Tibial artery (tissue), 4 donors: ENCODE measurements at regions of chr2 and their contacts with region 1.

Region 1: GRCh38 chr2:140013545-140014203 is 1233.5 kb upstream of the NXPH2 start:
- DNase-seq: no peak
- H3K4me3 ChIP-seq: no peak overlapping the region
- H3K27ac ChIP-seq: no peak overlapping the region
- H3K4me1 ChIP-seq: no peaks in the 10 kb centered on the region
- H3K27me3 ChIP-seq: no peaks in the 10 kb centered on the region
- CTCF ChIP-seq: no peak

Region 2: GRCh38 chr2:141501752-141502151 is 1488.1 kb after region 1 on chr2:
- intact Hi-C with region 1: loop called (anchors 5 kb)
- DNase-seq: no peak
- H3K4me3 ChIP-seq: no peak overlapping the region
- H3K27ac ChIP-seq: no peak overlapping the region
- H3K4me1 ChIP-seq: no peaks in the 10 kb centered on the region
- H3K27me3 ChIP-seq: no peaks in the 10 kb centered on the region
- CTCF ChIP-seq: no peak